ENCODE measurements at regions of chrX and their contacts with region 1.

Region 1: DNA sequence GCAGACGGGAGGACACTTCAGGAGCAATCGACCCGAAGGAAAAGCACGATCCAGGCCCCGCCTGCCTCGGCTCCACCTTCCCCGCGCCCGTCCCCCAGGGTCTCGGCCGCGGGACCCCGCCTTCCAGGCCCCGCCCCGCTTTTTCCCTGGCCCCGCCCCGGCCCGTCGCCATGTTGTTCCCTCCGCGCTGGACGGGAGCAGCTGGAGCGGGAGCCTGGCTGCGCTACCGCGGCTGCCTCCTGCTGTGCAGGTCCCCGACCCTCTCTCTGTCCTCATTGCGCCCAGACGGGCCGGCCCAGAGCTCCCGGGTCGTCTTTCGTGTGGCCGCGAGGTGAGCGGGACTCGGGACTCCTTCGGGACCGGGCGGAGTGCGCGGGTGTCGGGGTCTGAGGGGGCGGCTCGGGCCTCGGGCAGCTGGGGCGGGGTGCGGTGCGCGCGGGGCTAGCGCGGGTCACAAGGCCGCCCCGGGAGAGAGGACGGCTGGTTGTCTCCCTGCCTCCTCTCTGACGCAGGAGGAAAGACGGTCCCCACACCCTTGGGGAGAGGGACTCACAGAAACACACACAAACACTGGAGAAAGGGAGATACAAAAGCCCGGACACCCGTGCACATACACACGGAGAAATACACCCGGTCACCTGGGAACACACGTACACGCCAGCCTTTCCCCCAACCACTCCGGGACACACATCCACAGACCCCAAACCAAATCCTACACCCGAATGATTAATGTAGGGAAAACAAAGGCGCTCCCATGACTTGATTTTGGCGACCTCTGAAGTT is at the start of gene RAB9A:
- DNase-seq: peak; percentile 68 to 97 (median 77)

Region 2: DNA sequence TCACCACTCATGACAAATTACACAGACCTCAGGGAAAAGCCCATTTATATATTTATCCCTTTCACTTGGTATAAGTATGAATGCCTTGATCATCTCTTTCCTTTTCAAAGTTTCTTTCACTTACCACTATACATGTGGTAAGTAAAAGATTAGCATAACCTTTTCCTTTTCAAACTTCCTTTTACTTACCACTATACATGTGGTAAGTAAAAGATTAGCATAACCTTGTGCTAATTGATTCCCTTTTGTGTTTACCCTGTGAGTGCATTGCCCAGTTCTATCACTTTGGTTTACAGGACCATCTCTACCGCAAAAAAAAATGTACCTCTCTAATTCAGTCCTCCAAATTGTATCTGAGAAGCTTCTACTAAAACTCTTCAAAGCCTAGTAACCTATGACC is 68.9 kb before region 1 on chrX:
- intact Hi-C with region 1: no loop called
- DNase-seq: no peak

Region 3: DNA sequence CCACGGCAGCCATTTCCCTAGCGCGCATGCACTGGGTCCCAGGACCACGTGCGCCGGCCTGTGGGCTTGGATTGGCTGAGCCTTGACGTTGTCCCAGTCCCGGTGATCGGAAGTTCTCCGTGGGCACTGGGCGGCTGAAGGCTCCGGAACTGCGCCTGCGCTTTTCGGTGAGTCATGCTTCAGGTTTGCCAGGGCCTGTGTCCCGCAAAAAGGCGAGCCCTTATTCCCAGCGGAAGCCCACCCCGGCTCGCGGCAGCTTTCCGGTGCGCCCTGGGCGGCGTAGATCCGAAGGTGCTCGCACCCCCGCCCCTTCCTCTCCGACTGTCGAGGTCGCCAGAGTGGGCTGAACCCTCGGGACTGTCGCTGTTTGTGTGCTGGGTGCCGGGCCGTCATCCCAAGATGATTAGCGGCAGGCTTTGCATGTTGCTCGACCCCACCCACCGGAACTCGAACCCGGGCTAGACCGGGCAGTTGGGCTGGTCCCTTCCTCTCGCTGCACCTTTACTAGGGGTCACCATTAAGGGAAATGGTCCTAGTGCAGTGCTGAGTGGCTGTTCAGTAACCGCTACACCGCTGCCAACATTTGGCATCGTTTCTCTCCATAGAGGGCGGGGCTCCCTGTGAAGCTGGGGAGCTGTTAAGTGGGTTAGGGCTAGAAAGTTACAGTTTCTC is 36.0 kb before region 1 on chrX and contains the start of gene TCEANC:
- intact Hi-C with region 1: loop called (anchors 2 kb)
- DNase-seq: peak; percentile 87 to 99 (median 92)

Region 4: GRCh38 chrX:13734278-13735172 is 45.4 kb after region 1 on chrX and contains the starts of genes OFD1 and TRAPPC2:
- intact Hi-C with region 1: loop called (anchors 5 kb)
- DNase-seq: peak; percentile 81 to 98 (median 84)

Region 5: DNA sequence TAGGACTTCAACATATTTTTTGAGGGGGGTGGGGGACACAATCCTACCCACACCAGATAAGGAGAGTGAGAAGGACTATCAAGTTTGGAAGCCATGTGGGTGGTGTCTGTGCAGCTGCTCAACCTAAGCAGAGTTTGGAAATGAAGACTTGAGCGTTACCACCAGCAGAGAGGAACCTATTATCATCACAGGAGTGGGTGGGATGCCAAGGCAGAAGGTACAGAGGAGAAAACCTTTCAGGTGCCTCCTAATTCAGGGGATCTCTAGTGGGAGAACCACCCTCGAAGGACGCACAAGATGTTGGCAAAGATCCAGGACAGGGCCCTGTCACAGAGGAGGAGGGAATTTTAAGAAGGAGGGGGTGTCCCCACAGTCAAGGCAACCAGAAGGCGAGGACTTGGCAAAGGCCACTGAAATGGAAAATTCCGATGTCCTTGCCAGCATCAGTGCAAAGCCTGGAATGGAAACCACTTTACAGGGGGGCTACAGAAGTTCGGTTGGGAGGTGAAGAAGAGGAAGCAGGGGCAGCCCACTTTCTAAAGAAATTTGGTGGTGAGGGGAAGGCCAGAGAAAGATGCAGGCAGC is 136.1 kb after region 1 on chrX:
- intact Hi-C with region 1: no loop called
- DNase-seq: peak in 3 of 10 donors; percentile 13 to 66 (median 23)